Calu3 (cell line): ENCODE measurements at regions of chr2 and their contacts with region 1.

Region 1: GRCh38 chr2:203535078-203535783 is at the start of gene RAPH1:
- DNase-seq: peak; percentile 88
- H3K4me3 Mint-ChIP-seq: peak within 1 kb of the TSS; percentile 93
- H3K27ac Mint-ChIP-seq: peak within 1 kb of the TSS; percentile 85
- H3K4me1 Mint-ChIP-seq: peaks cover 19% of the 10 kb centered on the region
- H3K27me3 Mint-ChIP-seq: no peaks in the 10 kb centered on the region
- CTCF ChIP-seq: no peak
- total RNA-seq, gene RAPH1: 126 and 141 TPM in 2 replicates

Region 2: DNA sequence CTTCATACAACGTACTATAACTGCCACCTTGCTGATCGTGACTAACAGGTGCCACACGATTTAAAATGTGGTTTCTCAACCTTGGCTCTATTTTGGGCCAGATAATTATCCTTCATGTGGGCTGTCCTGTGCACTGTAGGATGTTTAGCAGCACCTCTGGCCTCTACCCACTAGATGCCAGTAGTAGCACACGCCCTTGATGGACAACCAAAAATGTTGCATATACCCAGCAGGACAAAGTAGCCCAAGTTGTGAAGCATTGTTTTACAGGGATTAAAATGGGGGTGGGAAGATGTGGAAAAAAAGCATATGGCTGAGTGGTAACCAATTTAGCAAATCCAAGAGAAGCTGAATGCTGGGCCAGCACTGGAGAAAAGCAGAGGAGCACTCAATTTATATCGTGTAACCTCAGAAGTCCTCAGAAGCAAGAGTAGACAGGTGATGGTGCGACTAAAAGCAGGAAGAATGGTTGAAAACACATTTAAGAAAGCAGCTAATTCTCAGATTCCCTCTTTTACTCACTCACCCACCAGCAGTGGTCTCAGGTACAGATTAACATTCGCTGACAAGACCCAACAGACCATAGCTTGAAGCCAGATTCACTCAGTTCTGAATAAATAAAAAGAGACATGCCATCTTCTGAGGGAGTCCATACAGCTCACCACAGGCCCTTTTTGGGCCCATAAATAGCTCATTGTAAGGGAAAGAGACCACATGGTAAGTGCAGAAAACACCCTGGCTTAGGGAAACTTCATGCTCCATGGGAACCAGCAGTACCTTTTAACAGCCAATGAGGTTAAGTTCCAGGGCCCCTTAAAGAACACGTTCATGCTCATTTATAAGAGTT is 50.7 kb before region 1 on chr2:
- CTCF ChIA-PET with region 1: no interaction called
- intact Hi-C with region 1: loop called (anchors 1 kb)
- DNase-seq: peak; percentile 35
- H3K4me3 Mint-ChIP-seq: no peak overlapping the region
- H3K27ac Mint-ChIP-seq: peak overlapping the region; percentile 46
- H3K4me1 Mint-ChIP-seq: peaks cover 19% of the 10 kb centered on the region
- H3K27me3 Mint-ChIP-seq: no peaks in the 10 kb centered on the region
- CTCF ChIP-seq: peak; percentile 41

Region 3: DNA sequence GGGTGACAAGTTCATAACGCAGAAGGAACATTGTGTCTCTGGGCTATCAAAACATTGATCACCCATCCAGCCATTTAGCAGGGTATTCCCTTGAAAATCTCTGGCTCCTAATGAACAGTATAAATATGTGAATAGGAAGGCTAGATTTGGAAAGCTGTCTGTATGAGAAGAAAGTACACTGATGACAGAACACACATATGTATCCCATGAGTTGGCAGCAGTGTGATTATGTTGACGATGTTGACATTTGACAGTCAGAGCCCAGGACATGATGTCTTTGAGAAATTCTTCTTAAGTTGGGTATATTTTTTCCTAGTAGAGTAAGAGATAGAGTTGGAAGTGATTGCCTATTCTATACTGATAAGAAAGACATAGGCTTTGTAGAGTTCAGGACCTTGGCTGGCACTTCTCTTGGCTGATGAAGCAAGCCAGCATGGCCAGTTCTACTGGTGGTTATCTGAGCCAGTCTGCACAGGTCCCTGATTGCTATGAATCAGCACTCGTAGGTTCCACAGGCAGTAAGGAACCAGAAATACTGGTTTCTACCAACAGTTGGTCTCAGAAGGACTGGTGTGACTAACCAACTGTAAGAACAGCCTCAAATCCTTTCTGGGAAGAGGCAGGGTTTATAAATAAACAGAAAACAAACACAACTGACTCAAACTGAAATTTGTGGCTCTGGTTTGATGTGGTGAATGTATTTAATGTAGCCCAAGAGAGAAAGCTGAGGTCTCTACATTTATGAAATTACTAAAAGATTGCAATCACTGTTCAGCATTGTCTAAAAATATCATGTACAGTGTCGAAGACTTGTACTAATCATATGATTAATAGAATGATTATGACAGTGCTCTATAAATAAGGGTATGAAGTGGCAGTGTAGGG is 43.8 kb after region 1 on chr2:
- CTCF ChIA-PET with region 1: no interaction called
- intact Hi-C with region 1: loop called (anchors 2 kb)
- DNase-seq: peak; percentile 79
- H3K4me3 Mint-ChIP-seq: peak overlapping the region; percentile 57
- H3K27ac Mint-ChIP-seq: peak overlapping the region; percentile 97
- H3K4me1 Mint-ChIP-seq: peaks cover 55% of the 10 kb centered on the region
- H3K27me3 Mint-ChIP-seq: no peaks in the 10 kb centered on the region
- CTCF ChIP-seq: no peak

Region 4: GRCh38 chr2:203682688-203683130 is 147.5 kb after region 1 on chr2:
- CTCF ChIA-PET with region 1: no interaction called
- intact Hi-C with region 1: no loop called
- DNase-seq: no peak
- H3K4me3 Mint-ChIP-seq: no peak overlapping the region
- H3K27ac Mint-ChIP-seq: peak overlapping the region; percentile 100
- H3K4me1 Mint-ChIP-seq: peaks cover 84% of the 10 kb centered on the region
- H3K27me3 Mint-ChIP-seq: no peaks in the 10 kb centered on the region
- CTCF ChIP-seq: no peak